ENCODE measurements at regions of chr10 and their contacts with region 1.

Region 1: GRCh38 chr10:102583435-102584417 is 60.6 kb upstream of the TRIM8 start:
- DNase-seq: peak; percentile 51
- ATAC-seq: peak; percentile 100
- H3K4me3 ChIP-seq: no peak overlapping the region
- H3K27ac ChIP-seq: no peak overlapping the region
- H3K4me1 ChIP-seq: no peaks in the 10 kb centered on the region
- H3K27me3 ChIP-seq: no peaks in the 10 kb centered on the region
- CTCF ChIP-seq: peak; percentile 86 to 96 (median 92)
- EP300 ChIP-seq: no peak
- POLR2A ChIP-seq: no peak
- RAD21 ChIP-seq: peak; percentile 92

Region 2: GRCh38 chr10:101671453-101671852 is 912.3 kb before region 1 on chr10:
- CTCF ChIA-PET with region 1: no interaction called
- POLR2A ChIA-PET with region 1: no interaction called
- RAD21 ChIA-PET with region 1: no interaction called
- SMC1A ChIA-PET with region 1: no interaction called
- in situ Hi-C with region 1: no loop called
- intact Hi-C with region 1: no loop called
- DNase-seq: peak; percentile 60
- ATAC-seq: peak; percentile 91
- H3K4me3 ChIP-seq: no peak overlapping the region
- H3K27ac ChIP-seq: peak overlapping the region; percentile 78
- H3K4me1 ChIP-seq: peaks cover 26% of the 10 kb centered on the region
- H3K27me3 ChIP-seq: no peaks in the 10 kb centered on the region
- CTCF ChIP-seq: no peak
- EP300 ChIP-seq: no peak
- POLR2A ChIP-seq: no peak
- RAD21 ChIP-seq: no peak

Region 3: DNA sequence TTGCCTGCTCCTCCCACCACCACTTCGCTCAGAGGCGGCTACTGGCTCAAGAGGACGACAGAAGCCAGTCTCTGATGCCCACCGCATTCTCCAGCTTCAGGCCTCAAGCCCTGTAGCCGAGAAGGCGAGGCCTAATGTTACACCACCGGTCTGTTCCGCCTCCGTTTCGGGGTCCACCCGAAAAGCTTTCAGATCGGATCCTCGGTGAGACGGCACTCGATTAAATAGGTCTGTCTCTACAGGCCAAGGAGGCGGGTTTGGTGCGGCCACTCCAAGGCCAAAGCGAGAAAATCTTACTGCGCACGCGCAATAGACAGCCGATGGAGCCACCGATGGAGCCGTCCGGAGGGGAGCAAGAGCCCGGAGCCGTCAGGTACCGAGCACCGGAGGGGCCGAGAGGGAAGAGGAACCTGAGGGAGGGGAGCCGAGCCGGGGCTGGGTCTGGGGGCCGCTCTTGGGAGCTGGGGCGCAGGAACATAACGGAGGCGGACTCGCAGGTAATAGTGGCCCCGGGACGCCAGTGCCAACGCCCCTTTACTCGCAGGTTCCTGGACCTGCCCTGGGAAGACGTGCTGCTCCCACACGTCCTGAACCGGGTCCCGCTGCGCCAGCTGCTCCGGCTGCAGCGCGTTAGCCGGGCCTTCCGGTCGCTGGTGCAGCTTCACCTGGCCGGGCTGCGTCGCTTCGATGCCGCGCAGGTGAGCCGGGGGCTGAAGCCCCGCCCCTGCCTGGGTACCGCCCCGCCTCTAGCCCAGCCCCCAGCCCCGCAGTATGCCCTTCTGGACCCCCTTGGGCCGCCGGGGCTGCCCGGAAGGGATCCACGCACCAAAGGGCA is 162.7 kb before region 1 on chr10 and contains the start of gene FBXL15:
- CTCF ChIA-PET with region 1: interaction called, 18 read pairs
- POLR2A ChIA-PET with region 1: no interaction called
- RAD21 ChIA-PET with region 1: interaction called, 4 read pairs
- SMC1A ChIA-PET with region 1: no interaction called
- in situ Hi-C with region 1: no loop called
- intact Hi-C with region 1: no loop called
- DNase-seq: peak; percentile 89
- ATAC-seq: peak; percentile 77
- H3K4me3 ChIP-seq: peak within 1 kb of the TSS; percentile 98
- H3K27ac ChIP-seq: peak within 1 kb of the TSS; percentile 85
- H3K4me1 ChIP-seq: peaks cover 18% of the 10 kb centered on the region
- H3K27me3 ChIP-seq: no peaks in the 10 kb centered on the region; a peak in 1 of 4 replicates
- CTCF ChIP-seq: no peak
- EP300 ChIP-seq: no peak
- POLR2A ChIP-seq: peak; percentile 79
- RAD21 ChIP-seq: no peak
- polyA plus RNA-seq, gene FBXL15: 0.13 to 0.66 TPM

Region 4: DNA sequence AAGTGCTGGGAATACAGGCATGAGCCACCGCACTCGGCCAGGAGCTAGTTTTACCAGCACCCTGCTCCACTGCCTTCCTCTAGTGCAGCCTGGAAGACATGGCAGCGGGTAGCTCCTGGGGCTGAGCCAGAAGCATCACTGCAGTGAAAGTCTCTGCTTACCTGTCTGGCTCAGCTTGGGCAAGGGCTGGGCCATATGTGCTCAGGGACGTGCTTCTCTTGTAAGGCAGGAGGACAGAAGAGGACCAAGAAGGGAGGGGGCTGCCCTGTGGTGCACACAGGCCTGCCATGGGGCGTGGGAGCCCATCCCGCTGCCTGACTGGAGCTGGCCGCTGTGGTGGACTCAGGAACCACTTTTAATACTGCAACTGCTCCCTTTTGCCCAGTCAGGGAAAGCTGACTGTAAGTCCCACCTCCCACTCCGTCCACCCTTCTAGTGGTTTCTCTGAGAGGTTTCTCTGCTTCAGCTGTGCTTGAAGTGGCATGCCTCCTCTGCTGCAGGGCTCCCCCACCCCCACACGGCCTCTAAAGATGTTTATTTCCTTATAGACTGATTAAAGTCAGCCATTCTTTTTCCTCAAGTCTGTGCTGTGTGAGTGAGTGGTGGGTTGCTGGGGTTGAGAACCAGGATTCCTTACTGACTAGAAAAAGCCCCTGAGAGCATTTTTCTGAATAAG is 107.1 kb before region 1 on chr10:
- CTCF ChIA-PET with region 1: interaction called, 34 read pairs
- POLR2A ChIA-PET with region 1: no interaction called
- RAD21 ChIA-PET with region 1: interaction called, 23 read pairs
- SMC1A ChIA-PET with region 1: interaction called, 24 read pairs
- in situ Hi-C with region 1: no loop called
- intact Hi-C with region 1: loop called (anchors 1 kb)
- DNase-seq: no peak
- ATAC-seq: no peak
- H3K4me3 ChIP-seq: no peak overlapping the region
- H3K27ac ChIP-seq: no peak overlapping the region
- H3K4me1 ChIP-seq: no peaks in the 10 kb centered on the region
- H3K27me3 ChIP-seq: no peaks in the 10 kb centered on the region
- CTCF ChIP-seq: no peak
- EP300 ChIP-seq: no peak
- POLR2A ChIP-seq: no peak
- RAD21 ChIP-seq: no peak

Region 5: GRCh38 chr10:102503281-102504220 is 80.2 kb before region 1 on chr10 and contains the start of gene SUFU:
- CTCF ChIA-PET with region 1: interaction called, 325 read pairs
- POLR2A ChIA-PET with region 1: interaction called, 24 read pairs
- RAD21 ChIA-PET with region 1: interaction called, 206 read pairs
- SMC1A ChIA-PET with region 1: interaction called, 137 read pairs
- in situ Hi-C with region 1: loop called (anchors 5 kb)
- intact Hi-C with region 1: loop called (anchors 1 kb)
- DNase-seq: peak; percentile 93
- ATAC-seq: peak; percentile 82
- H3K4me3 ChIP-seq: peak within 1 kb of the TSS; percentile 88
- H3K27ac ChIP-seq: peak within 1 kb of the TSS; percentile 72; the same call in 1 of the 2 replicates
- H3K4me1 ChIP-seq: peaks cover 7% of the 10 kb centered on the region
- H3K27me3 ChIP-seq: no peaks in the 10 kb centered on the region
- CTCF ChIP-seq: peak; percentile 82 to 98 (median 89); a peak in 5 of 6 replicates
- EP300 ChIP-seq: no peak
- POLR2A ChIP-seq: peak; percentile 92
- RAD21 ChIP-seq: peak; percentile 88
- polyA plus RNA-seq, gene SUFU: 0.68 to 0.84 TPM

Region 6: GRCh38 chr10:102565793-102566192 is 17.9 kb before region 1 on chr10:
- CTCF ChIA-PET with region 1: interaction called, 26 read pairs
- POLR2A ChIA-PET with region 1: interaction called, 4 read pairs
- RAD21 ChIA-PET with region 1: interaction called, 8 read pairs
- SMC1A ChIA-PET with region 1: interaction called, 18 read pairs
- in situ Hi-C with region 1: no loop called
- intact Hi-C with region 1: no loop called
- DNase-seq: no peak
- ATAC-seq: no peak
- H3K4me3 ChIP-seq: no peak overlapping the region
- H3K27ac ChIP-seq: no peak overlapping the region
- H3K4me1 ChIP-seq: peaks cover 15% of the 10 kb centered on the region
- H3K27me3 ChIP-seq: no peaks in the 10 kb centered on the region
- CTCF ChIP-seq: no peak
- EP300 ChIP-seq: no peak
- POLR2A ChIP-seq: no peak
- RAD21 ChIP-seq: no peak

Measured in GM12878 (cell line).